Calu3 (cell line): ENCODE measurements at regions of chr20 and their contacts with region 1.

Region 1: DNA sequence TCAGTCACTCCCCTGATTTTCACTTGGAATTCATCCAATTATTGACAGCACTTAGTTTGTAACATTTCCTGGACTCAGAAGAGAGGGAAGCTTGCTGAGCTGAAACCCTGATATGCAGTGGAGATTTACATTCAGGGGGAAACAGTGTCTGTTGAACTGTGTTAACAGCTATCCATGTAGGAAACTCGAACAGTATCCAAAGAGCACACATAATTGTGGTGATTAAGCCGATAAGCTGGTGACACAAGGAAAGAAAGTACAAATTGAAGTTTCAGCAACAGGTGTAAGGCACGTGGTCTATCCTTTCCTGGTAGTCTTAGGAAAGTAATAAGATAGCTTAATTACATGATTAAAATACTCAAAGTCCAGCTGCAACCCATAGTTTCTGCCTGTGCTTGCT is 78.1 kb upstream of the FLRT3 start:
- DNase-seq: peak; percentile 4
- H3K4me3 Mint-ChIP-seq: peak overlapping the region; percentile 39
- H3K27ac Mint-ChIP-seq: peak overlapping the region; percentile 87
- H3K4me1 Mint-ChIP-seq: peaks cover 56% of the 10 kb centered on the region
- H3K27me3 Mint-ChIP-seq: no peaks in the 10 kb centered on the region
- CTCF ChIP-seq: no peak

Region 2: DNA sequence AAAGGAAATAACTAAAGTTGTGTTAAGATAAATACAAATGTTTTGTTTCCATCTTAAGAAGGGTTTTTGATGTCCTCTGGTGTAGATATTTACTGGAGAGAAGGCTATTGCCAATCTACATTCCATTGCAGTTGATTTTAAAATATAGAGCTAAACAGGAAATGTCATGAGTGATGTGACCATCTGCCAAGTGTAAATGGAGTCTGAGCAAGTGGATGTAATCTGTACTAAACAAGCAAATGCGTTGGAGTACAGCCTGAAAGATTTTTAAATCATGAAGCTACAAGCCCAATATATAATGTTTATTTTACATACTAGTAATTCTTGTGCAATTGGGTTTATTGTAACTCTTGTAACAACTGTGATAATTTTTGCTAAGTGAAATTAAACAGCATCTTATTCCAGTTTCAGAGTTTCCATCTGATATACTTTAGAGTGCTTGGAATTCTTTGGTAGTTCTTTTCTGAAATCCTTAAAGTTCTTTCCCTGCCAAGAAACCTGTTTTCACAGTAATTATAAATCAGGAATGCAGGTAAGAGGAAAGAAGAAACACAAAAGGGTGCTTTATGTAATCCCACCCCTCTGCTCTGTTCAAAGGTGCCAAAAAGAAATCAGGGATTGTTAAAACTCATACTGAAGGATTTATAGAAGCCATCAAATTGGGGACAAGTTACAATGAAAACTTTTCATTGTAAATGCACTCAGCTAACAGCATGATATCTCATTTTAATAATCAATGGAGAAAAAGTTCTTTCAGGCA is 30.9 kb before region 1 on chr20:
- CTCF ChIA-PET with region 1: no interaction called
- intact Hi-C with region 1: no loop called
- DNase-seq: no peak
- H3K4me3 Mint-ChIP-seq: no peak overlapping the region
- H3K27ac Mint-ChIP-seq: no peak overlapping the region
- H3K4me1 Mint-ChIP-seq: no peaks in the 10 kb centered on the region
- H3K27me3 Mint-ChIP-seq: no peaks in the 10 kb centered on the region
- CTCF ChIP-seq: no peak

Region 3: DNA sequence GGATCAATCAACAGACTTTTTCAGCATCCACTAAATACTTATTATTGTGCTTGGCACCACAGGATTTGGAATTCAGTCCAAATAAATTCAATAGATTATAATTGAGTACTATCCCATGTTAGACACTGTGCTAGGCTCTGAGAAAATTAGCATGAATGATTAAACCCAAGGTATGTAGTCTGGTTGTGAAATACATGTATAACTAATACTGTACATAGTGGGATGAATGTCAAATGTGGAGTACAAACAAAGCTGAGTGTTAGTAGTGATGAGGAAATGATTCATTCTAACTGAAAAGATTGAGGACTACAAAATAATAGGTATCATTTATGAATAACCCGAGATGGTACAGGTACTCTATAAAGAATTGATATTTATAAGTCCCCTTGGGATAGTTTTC is 33.8 kb after region 1 on chr20:
- CTCF ChIA-PET with region 1: no interaction called
- intact Hi-C with region 1: loop called (anchors 1 kb)
- DNase-seq: no peak
- H3K4me3 Mint-ChIP-seq: peak overlapping the region; percentile 21
- H3K27ac Mint-ChIP-seq: peak overlapping the region; percentile 98
- H3K4me1 Mint-ChIP-seq: peaks cover 61% of the 10 kb centered on the region
- H3K27me3 Mint-ChIP-seq: no peaks in the 10 kb centered on the region
- CTCF ChIP-seq: no peak

Region 4: GRCh38 chr20:14612391-14612790 is 196.9 kb after region 1 on chr20:
- CTCF ChIA-PET with region 1: no interaction called
- intact Hi-C with region 1: loop called (anchors 10 kb)
- DNase-seq: no peak
- H3K4me3 Mint-ChIP-seq: no peak overlapping the region
- H3K27ac Mint-ChIP-seq: no peak overlapping the region
- H3K4me1 Mint-ChIP-seq: peaks cover 11% of the 10 kb centered on the region
- H3K27me3 Mint-ChIP-seq: no peaks in the 10 kb centered on the region
- CTCF ChIP-seq: no peak